ENCODE measurements at regions of chr20 and their contacts with region 1.

Region 1: DNA sequence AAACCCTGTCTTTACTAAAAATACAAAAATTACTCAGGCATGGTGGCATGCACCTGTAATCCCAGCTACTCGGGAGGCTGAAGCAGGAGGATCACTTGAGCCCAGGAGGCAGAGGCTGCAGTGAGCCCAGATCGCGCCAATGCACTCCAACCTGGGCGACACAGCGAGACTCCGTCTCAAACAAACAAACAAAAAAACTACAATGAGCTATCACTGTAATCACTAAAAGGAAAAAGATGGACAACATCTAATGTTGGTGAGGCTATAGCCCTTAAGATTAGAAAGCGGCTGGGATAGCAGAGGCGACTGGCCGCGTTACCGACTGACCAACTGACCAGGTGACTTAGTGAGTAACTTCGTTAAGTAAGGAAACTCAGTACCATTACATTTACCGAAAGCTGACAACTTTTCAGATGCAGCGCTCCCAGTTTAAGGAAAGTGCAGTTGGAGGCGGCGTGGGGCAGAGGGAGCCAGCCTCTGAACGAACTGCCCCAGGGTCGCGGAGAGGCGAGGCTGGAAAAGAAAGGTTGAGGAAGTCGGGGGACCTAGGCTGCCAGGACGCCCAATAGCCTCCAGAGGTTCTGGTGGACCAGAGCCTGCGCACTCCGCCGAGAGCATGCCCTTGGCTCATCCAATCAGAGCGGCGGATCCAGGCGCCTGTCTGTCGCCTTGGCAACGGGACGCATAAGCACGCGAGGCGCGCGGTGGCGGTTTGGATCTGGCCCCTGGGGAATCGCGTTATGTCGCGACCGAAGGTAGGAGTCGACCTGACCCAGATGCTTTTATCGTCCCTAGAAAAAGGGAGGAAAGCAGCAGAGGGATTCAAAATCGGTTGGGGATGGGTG is 8.9 kb downstream of the TTLL9 start:
- DNase-seq: peak; percentile 86
- H3K4me3 Mint-ChIP-seq: peak overlapping the region; percentile 92
- H3K27ac Mint-ChIP-seq: no peak overlapping the region
- H3K4me1 Mint-ChIP-seq: peaks cover 9% of the 10 kb centered on the region
- H3K27me3 Mint-ChIP-seq: no peaks in the 10 kb centered on the region

Region 2: GRCh38 chr20:32109392-32110172 is 230.2 kb after region 1 on chr20 and contains the start of gene TM9SF4:
- CTCF ChIA-PET with region 1: no interaction called
- POLR2A ChIA-PET with region 1: no interaction called
- intact Hi-C with region 1: loop called (anchors 1 kb)
- DNase-seq: peak; percentile 92
- H3K4me3 Mint-ChIP-seq: peak within 1 kb of the TSS; percentile 89
- H3K27ac Mint-ChIP-seq: peak within 1 kb of the TSS; percentile 93
- H3K4me1 Mint-ChIP-seq: peaks cover 36% of the 10 kb centered on the region
- H3K27me3 Mint-ChIP-seq: no peaks in the 10 kb centered on the region
- total RNA-seq, gene TM9SF4: 35.8 to 37.3 TPM

Region 3: GRCh38 chr20:32155017-32155981 is 275.9 kb after region 1 on chr20:
- CTCF ChIA-PET with region 1: no interaction called
- POLR2A ChIA-PET with region 1: no interaction called
- intact Hi-C with region 1: no loop called
- DNase-seq: peak; percentile 46
- H3K4me3 Mint-ChIP-seq: no peak overlapping the region
- H3K27ac Mint-ChIP-seq: peak overlapping the region; percentile 33
- H3K4me1 Mint-ChIP-seq: peaks cover 10% of the 10 kb centered on the region
- H3K27me3 Mint-ChIP-seq: no peaks in the 10 kb centered on the region

Measured in activated CD4-positive, alpha-beta memory T cell treated with anti-CD3 and anti-CD28 coated beads for 36 hours (primary cell).